ENCODE measurements at regions of chr2 and their contacts with region 1.

Region 1: GRCh38 chr2:240143801-240144648 is 3.6 kb upstream of the OTOS start:
- DNase-seq: no peak
- H3K4me3 ChIP-seq: no peak overlapping the region
- CTCF ChIP-seq: peak; percentile 97

Region 2: DNA sequence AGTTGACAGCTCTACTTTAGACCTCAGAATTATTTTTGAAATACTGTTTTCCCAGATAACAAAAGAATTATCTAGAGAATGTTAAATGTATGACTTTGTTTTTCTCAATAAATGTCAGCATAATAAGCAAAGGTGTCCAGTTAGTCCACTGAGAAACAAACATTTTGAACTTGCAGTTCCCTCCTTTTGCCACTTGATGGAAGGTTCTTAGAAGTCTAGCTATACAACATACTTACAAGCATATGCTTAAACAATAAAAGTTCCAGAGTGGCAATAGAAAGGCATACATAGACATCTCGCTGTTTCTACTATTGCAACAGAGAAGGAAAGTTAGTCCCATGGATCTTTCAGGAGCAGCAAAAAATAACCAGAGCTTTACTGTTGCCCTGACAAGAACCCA is 130.7 kb before region 1 on chr2:
- CTCF ChIA-PET with region 1: interaction called, 10 read pairs
- POLR2A ChIA-PET with region 1: no interaction called
- DNase-seq: no peak
- H3K4me3 ChIP-seq: no peak overlapping the region
- CTCF ChIP-seq: peak; percentile 24

Region 3: DNA sequence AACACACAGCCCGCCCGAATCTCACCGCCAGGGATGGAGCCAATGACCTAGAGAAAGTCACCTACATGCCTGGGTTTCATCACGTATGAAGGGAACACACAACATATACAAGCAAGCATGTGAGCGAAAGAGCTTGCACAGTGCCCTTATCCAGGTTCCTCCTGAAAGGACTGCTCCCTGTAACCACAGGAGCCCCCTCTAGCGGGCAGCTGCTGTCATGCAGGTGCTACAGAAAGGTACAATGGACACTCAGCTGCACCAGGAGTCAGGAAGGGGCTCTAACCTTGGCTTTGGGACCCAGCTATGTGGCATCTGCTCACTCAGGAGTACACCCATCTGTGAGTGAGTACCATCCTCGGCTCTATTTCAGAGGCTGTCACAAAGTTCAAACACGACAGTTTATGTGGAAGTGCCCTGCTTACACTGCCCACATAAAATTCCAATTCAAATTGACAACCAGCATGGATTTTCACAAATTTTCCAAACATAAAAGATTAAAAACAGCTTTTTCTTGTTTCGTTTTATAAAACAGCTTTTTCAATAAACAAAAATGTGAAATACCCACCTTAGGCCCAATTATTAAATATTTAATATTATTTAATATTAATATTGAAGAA is 122.4 kb before region 1 on chr2:
- CTCF ChIA-PET with region 1: interaction called, 10 read pairs
- POLR2A ChIA-PET with region 1: no interaction called
- DNase-seq: no peak
- H3K4me3 ChIP-seq: no peak overlapping the region
- CTCF ChIP-seq: peak; percentile 88

Region 4: GRCh38 chr2:240060977-240061591 is 82.9 kb before region 1 on chr2:
- CTCF ChIA-PET with region 1: interaction called, 227 read pairs
- POLR2A ChIA-PET with region 1: no interaction called
- DNase-seq: peak; percentile 4
- H3K4me3 ChIP-seq: no peak overlapping the region
- CTCF ChIP-seq: peak; percentile 54

Region 5: DNA sequence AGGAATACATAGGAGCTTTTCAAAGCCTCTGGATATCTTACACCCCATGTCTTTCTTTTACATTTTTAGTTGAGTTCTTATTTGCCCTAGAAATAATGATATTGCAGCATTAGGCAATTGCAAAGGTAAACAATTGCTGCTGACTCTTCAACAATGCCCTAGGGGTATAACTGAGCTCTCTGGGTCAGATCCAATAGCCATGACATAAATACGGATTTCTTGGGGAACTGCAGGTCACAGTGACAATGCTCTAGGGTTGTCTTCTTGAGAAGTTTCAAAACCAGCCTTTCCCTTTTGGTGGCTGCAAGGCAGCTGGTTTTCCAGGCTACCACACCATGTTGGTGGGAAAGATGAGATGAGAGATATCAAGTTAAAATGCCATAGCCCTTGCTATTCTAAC is 74.2 kb before region 1 on chr2:
- CTCF ChIA-PET with region 1: interaction called, 62 read pairs
- POLR2A ChIA-PET with region 1: no interaction called
- DNase-seq: no peak
- H3K4me3 ChIP-seq: no peak overlapping the region
- CTCF ChIP-seq: no peak

Region 6: DNA sequence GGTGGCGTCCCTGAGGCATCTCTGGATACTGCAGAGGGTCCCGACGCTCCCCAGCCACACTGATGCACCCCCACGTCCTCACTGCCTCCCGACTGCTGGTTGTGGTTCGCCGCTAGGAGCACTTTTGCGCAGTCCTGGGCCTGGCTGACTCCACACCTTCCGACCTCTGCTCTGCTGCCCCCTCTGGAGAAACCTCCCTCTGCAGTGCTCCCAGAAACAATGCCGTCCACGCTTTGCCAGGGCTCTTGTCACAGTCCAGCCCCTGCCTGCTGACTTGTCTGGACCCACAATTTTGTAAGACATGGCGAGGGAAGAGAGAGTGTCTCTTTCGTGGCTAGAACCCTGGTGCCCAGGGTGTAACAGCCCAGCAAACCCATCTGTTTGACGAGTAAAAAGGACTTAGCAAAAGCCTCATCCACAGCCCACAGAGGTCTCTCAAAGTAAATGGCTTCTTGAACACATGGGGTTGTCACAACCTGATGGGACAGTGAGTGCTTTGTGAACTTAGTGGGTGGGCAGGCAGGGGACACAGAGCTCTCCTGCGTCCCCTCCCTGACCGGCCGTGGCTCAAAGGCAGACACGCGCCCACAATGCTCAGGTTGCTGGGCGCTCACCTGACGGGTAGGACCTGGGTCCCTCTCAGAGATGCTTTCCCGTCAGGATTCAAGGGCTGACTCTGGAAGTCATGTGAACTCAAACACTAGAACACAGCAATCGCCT is 11.9 kb before region 1 on chr2:
- CTCF ChIA-PET with region 1: interaction called, 14 read pairs
- POLR2A ChIA-PET with region 1: no interaction called
- DNase-seq: no peak
- H3K4me3 ChIP-seq: no peak overlapping the region
- CTCF ChIP-seq: no peak